Heart left ventricle (tissue), 16 donors: ENCODE measurements at regions of chr20 and their contacts with region 1.

Region 1: GRCh38 chr20:57748601-57749130 is 38.9 kb upstream of the PMEPA1 start:
- DNase-seq: peak; percentile 86 to 93 (median 88)
- ATAC-seq: peak; percentile 82 to 92 (median 88)
- H3K4me3 ChIP-seq: peak overlapping the region in 10 of 12 donors; percentile 6 to 49 (median 42)
- H3K27ac ChIP-seq: peak overlapping the region; percentile 1 to 92 (median 84)
- H3K4me1 ChIP-seq: peaks cover 9 to 34% (median 29%) of the 10 kb centered on the region in 12 donors
- H3K27me3 ChIP-seq: no peaks in the 10 kb centered on the region
- CTCF ChIP-seq: peak in 1 of 12 donors; percentile 30
- POLR2A ChIP-seq: no peak

Region 2: GRCh38 chr20:57698117-57698866 is 50.4 kb before region 1 on chr20:
- intact Hi-C with region 1: no loop called
- DNase-seq: no peak
- ATAC-seq: peak in 1 of 4 donors; percentile 28
- H3K4me3 ChIP-seq: no peak overlapping the region
- H3K27ac ChIP-seq: no peak overlapping the region
- H3K4me1 ChIP-seq: peaks cover 0 to 82% (median 14%) of the 10 kb centered on the region in 12 donors
- H3K27me3 ChIP-seq: no peaks in the 10 kb centered on the region
- CTCF ChIP-seq: no peak
- POLR2A ChIP-seq: no peak

Region 3: DNA sequence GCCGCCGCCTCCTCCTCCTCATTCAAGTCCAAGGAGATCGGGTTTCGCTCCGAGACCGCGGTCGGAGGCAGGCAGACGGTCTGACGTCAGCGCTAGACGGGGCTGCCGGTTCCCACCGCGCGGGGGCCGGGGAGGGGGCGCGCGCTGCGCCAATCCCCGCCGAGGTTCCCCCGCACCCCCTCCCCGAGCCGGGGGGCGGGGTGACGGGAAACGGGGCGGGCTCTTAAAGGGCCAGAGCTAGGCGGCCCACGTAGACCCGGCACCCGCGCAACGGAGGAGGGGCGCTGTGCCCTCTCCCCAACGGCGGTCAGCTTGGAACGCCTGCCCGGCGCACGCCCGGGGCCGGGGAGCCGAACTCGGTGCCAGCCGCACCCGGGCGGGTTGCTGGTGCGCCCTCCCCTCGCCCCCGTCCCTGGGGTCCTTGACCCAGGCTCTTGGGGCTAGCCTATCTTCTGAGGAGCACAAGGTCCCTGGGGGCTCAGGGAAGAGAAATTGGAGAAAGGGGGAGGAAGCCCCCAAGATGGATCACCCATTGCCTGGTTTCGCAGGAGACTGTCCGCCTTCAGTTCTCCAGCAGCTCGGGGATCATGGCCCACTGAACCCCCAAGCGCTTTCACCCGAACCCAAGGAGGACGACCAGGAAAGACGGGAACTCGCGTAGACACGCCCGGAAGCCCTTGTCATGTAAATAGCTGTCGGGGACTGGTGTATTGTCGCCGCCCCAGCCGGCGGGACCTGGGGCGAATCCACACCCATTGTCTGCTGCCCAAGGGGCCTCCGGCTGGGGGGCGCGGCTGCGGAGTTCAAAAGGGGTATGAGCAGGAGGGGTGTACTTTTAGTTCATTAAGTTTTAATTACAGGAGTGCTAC is 38.5 kb before region 1 on chr20 and contains the start of gene PMEPA1:
- intact Hi-C with region 1: loop called in 3 of 10 experiments (anchors 2 to 5 kb)
- DNase-seq: peak; percentile 96 to 97 (median 96)
- ATAC-seq: peak; percentile 81 to 93 (median 91)
- H3K4me3 ChIP-seq: peak within 1 kb of the TSS; percentile 65 to 96 (median 77)
- H3K27ac ChIP-seq: peak within 1 kb of the TSS; percentile 63 to 98 (median 93)
- H3K4me1 ChIP-seq: peaks cover 0 to 74% (median 38%) of the 10 kb centered on the region in 12 donors
- H3K27me3 ChIP-seq: peaks cover 0 to 3% (median 0%) of the 10 kb centered on the region in 9 donors
- CTCF ChIP-seq: peak in 4 of 12 donors; percentile 8 to 26 (median 18)
- POLR2A ChIP-seq: peak in 1 of 2 donors; percentile 94
- total RNA-seq, gene PMEPA1: 25.1 to 91.4 (median 30.0) TPM

Region 4: DNA sequence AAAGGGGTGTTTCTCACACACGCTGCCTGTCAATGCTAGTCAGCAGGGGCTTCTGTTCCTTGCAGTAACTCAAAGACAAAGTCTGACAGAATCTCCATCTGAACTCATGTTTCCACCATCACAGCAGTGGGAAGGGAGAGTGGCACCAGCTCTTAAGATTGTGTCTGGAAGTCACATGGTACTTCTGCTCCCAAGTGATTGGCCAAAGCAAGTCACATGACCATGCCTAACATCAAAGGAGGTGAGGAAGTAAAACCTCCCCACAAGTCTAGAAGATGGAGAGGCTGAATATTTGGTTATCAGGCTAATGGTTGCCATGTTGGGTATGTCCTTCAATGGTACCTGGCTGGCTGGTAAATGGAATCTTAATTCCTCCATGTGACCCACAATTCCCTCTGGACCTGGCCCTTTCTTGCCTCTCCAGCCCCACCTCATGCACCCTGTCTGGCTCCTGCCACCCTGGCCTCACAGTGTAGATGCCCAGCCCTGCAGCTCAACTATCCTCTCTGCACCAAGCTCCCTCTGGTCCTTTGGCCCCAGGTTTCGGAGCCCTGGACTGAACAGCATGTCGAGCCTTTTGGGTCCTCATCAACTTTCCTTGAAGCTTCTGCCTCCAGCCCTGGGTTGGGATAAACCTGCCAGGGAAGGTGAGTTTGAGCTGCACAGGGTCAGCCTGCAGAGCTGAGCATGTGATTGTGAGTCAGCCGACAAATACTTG is 12.2 kb after region 1 on chr20:
- intact Hi-C with region 1: no loop called
- DNase-seq: no peak
- ATAC-seq: no peak
- H3K4me3 ChIP-seq: no peak overlapping the region
- H3K27ac ChIP-seq: no peak overlapping the region
- H3K4me1 ChIP-seq: no peaks in the 10 kb centered on the region
- H3K27me3 ChIP-seq: no peaks in the 10 kb centered on the region
- CTCF ChIP-seq: no peak
- POLR2A ChIP-seq: no peak

Region 5: GRCh38 chr20:57809596-57810172 is 61.0 kb after region 1 on chr20:
- intact Hi-C with region 1: loop called in 2 of 10 experiments (anchors 5 kb)
- DNase-seq: peak in 2 of 5 donors; percentile 58 to 67
- ATAC-seq: peak; percentile 40 to 75 (median 51)
- H3K4me3 ChIP-seq: no peak overlapping the region
- H3K27ac ChIP-seq: no peak overlapping the region
- H3K4me1 ChIP-seq: peaks cover 0 to 13% (median 0%) of the 10 kb centered on the region in 12 donors
- H3K27me3 ChIP-seq: no peaks in the 10 kb centered on the region
- CTCF ChIP-seq: no peak
- POLR2A ChIP-seq: no peak